Calu3 (cell line): ENCODE measurements at regions of chr12 and their contacts with region 1.

Region 1: DNA sequence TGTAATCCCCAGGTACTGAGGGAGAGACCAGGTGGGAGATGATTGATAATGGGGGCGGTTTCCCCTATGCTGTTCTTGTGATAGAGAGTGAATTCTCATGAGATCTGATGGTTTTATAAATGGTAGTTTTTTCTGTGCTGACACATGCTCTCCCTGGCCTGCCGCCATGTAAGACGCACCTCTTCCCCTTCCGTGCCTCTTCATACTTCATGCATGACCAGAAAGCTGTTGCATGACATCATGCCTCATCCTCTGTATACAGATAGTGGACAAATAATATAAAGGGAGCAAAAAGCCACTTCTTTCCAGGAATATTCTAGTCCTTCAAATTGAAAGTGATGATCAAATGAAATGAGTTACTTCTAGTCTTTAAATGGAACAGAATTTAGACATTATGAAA is 47.3 kb upstream of the LRIG3 start:
- DNase-seq: no peak
- H3K4me3 Mint-ChIP-seq: no peak overlapping the region
- H3K27ac Mint-ChIP-seq: no peak overlapping the region
- H3K4me1 Mint-ChIP-seq: peaks cover 31% of the 10 kb centered on the region
- H3K27me3 Mint-ChIP-seq: no peaks in the 10 kb centered on the region
- CTCF ChIP-seq: no peak

Region 2: GRCh38 chr12:58416236-58416635 is 551.3 kb before region 1 on chr12:
- CTCF ChIA-PET with region 1: no interaction called
- intact Hi-C with region 1: no loop called
- DNase-seq: no peak
- H3K4me3 Mint-ChIP-seq: no peak overlapping the region
- H3K27ac Mint-ChIP-seq: no peak overlapping the region
- H3K4me1 Mint-ChIP-seq: peaks cover 52% of the 10 kb centered on the region
- H3K27me3 Mint-ChIP-seq: no peaks in the 10 kb centered on the region
- CTCF ChIP-seq: no peak

Region 3: GRCh38 chr12:58871556-58871955 is 96.0 kb before region 1 on chr12:
- CTCF ChIA-PET with region 1: no interaction called
- intact Hi-C with region 1: no loop called
- DNase-seq: no peak
- H3K4me3 Mint-ChIP-seq: no peak overlapping the region
- H3K27ac Mint-ChIP-seq: no peak overlapping the region
- H3K4me1 Mint-ChIP-seq: peaks cover 16% of the 10 kb centered on the region
- H3K27me3 Mint-ChIP-seq: no peaks in the 10 kb centered on the region
- CTCF ChIP-seq: no peak

Region 4: DNA sequence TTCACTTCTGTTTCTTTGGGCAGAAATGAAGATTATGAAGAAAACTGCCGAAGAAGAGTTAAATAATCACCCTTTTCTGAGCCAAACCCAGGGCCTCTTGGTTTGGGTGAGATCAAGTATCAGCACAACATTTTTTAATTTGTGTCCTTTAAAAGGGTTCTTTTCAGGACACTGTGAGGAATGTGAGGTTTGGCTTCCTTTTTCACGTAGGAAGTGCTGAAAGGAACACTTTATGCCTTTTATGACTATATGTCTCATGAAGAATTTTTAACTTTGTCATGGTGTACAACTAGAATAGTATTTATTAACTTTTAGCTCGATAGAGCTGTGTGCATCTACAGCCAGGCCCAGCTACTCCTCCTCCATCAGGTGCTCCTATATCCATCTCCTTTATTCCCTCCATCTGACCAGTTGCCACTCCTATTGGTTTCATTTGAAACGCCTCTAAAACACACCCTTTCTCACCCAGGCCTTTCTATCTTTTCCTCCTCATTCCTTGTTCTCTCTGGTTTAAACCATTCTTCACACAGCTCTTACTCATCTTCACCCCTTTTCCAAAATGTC is 56.4 kb after region 1 on chr12:
- CTCF ChIA-PET with region 1: no interaction called
- intact Hi-C with region 1: loop called (anchors 5 kb)
- DNase-seq: no peak
- H3K4me3 Mint-ChIP-seq: no peak overlapping the region
- H3K27ac Mint-ChIP-seq: no peak overlapping the region
- H3K4me1 Mint-ChIP-seq: peaks cover 22% of the 10 kb centered on the region
- H3K27me3 Mint-ChIP-seq: no peaks in the 10 kb centered on the region
- CTCF ChIP-seq: no peak

Region 5: GRCh38 chr12:59067083-59067482 is 99.5 kb after region 1 on chr12:
- CTCF ChIA-PET with region 1: no interaction called
- intact Hi-C with region 1: no loop called
- DNase-seq: peak; percentile 74
- H3K4me3 Mint-ChIP-seq: peak overlapping the region; percentile 33
- H3K27ac Mint-ChIP-seq: peak overlapping the region; percentile 91
- H3K4me1 Mint-ChIP-seq: peaks cover 59% of the 10 kb centered on the region
- H3K27me3 Mint-ChIP-seq: no peaks in the 10 kb centered on the region
- CTCF ChIP-seq: no peak